ENCODE measurements at regions of chr1 and their contacts with region 1.

Region 1: DNA sequence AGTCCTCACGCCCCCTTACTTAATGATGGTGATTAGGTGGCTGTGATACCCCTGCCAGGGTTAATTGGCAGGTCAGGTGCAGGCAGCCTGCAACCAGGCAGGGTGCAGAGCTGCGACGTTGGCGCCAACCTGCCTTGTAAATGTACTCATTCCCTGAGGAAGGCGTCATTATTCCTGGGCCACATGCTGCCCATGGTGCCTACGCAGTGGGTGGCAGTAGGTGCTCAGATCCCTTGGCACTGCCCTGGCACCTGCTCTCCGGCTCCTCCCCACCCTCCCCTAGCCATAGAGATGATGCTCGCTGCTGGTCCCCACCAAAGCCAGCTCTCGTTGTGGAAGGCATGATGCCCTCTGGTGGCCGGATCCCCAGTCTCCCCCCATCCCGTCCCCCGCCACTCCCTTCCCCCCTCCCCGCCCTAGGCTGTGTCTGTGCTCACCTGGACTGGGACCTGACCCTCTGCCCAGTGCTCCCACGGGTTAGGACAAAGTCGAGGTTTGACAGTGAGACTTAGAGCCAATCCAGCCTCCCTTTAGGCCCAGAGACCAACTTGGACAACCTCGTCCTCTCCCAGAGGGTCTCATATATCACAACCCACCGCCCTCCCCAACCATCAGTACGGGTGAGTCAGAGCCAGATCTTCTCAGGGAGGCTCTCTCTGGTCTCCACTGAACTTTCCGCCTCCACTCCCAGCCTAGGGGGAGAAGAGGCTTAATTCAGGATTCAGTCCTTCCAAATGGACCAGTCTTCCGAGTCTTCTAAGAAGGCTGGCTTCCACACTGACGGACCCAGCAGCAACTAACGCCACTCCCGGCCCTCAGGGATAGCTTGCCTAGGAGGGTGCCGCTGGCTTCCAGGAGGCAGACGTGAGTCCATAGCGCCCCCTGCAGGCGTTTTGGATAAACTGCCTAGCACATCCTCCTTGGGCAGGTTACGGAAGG is 5.7 kb downstream of the KRTCAP2 start:
- DNase-seq: peak; percentile 93
- H3K4me3 ChIP-seq: peak overlapping the region; percentile 11
- H3K27ac ChIP-seq: no peak overlapping the region
- H3K4me1 ChIP-seq: peaks cover 12% of the 10 kb centered on the region
- H3K27me3 ChIP-seq: no peaks in the 10 kb centered on the region
- CTCF ChIP-seq: peak; percentile 98

Region 2: DNA sequence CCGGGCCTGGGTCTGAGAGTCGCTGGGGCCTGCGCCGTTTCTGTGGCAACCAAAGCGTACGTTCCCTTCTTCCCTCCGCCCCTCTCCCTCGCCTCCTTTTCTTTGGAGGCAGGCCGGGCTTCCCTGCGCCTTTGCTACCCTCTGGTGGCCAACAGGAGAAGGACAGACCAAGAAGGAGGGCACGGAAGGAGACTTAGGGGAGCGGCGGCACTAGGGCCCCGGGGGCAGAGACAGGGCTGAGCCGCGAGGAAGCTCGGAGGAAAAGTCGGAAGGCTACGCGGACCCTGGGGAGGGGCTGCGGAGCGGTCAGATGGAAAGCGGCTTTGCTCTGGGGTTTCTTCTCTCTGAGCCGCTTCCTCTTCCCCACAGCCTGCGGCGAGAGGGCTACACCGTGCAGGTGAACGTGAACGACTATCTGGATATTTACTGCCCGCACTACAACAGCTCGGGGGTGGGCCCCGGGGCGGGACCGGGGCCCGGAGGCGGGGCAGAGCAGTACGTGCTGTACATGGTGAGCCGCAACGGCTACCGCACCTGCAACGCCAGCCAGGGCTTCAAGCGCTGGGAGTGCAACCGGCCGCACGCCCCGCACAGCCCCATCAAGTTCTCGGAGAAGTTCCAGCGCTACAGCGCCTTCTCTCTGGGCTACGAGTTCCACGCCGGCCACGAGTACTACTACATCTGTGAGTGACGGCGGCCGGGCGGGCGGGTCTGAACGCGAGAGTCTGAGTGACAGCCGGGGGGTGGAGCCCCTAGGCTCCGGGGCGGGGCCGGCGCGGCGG is 82.5 kb before region 1 on chr1:
- CTCF ChIA-PET with region 1: interaction called, 89 read pairs
- POLR2A ChIA-PET with region 1: no interaction called
- intact Hi-C with region 1: no loop called
- DNase-seq: peak; percentile 99
- H3K4me3 ChIP-seq: peak overlapping the region; percentile 69
- H3K27ac ChIP-seq: peak overlapping the region; percentile 66
- H3K4me1 ChIP-seq: peaks cover 42% of the 10 kb centered on the region
- H3K27me3 ChIP-seq: peaks cover 22% of the 10 kb centered on the region
- CTCF ChIP-seq: peak; percentile 95

Region 3: GRCh38 chr1:155091071-155091709 is 76.2 kb before region 1 on chr1:
- CTCF ChIA-PET with region 1: interaction called, 89 read pairs
- POLR2A ChIA-PET with region 1: no interaction called
- intact Hi-C with region 1: loop called (anchors 1 kb)
- DNase-seq: peak; percentile 91
- H3K4me3 ChIP-seq: no peak overlapping the region
- H3K27ac ChIP-seq: no peak overlapping the region
- H3K4me1 ChIP-seq: peaks cover 7% of the 10 kb centered on the region
- H3K27me3 ChIP-seq: no peaks in the 10 kb centered on the region
- CTCF ChIP-seq: peak; percentile 99

Region 4: DNA sequence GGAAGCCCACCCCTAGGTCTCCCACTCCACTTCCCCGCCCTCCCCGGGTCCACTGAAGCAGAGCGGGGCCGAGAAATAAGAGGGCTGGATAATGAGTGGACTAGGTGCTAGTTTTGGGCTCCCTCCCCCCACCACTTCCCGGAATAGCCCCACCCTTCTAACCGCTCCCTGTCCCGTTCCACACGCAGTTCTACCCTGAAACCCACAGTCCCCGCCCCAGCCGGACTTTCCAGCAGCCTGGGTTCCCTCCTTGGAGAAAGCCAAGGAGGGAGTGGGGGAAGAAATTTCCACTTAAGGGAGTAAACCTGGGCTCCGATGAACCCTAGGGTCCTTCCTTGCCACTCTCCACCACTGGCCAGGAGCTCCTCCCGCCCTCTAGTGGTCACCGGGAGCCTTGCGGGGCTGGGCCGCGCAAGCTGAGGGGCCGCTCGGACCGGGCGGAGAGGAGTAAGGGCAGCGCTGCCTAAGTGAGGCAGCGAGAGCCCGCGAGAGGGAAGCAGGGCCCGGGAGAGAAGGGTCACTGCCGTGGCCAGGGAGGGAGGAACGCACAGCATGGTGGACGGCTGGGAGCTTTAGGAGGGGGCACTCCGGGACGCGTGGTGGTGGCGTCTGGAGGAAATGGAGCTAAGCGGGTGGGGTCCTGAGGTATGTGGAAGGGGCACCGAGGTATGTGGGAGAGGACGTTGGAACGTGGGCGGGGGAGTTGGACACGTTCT is 26.0 kb after region 1 on chr1:
- CTCF ChIA-PET with region 1: interaction called, 15 read pairs
- POLR2A ChIA-PET with region 1: no interaction called
- intact Hi-C with region 1: no loop called
- DNase-seq: peak; percentile 89
- H3K4me3 ChIP-seq: peak overlapping the region; percentile 57
- H3K27ac ChIP-seq: peak overlapping the region; percentile 84
- H3K4me1 ChIP-seq: peaks cover 22% of the 10 kb centered on the region
- H3K27me3 ChIP-seq: no peaks in the 10 kb centered on the region
- CTCF ChIP-seq: peak; percentile 99

Region 5: DNA sequence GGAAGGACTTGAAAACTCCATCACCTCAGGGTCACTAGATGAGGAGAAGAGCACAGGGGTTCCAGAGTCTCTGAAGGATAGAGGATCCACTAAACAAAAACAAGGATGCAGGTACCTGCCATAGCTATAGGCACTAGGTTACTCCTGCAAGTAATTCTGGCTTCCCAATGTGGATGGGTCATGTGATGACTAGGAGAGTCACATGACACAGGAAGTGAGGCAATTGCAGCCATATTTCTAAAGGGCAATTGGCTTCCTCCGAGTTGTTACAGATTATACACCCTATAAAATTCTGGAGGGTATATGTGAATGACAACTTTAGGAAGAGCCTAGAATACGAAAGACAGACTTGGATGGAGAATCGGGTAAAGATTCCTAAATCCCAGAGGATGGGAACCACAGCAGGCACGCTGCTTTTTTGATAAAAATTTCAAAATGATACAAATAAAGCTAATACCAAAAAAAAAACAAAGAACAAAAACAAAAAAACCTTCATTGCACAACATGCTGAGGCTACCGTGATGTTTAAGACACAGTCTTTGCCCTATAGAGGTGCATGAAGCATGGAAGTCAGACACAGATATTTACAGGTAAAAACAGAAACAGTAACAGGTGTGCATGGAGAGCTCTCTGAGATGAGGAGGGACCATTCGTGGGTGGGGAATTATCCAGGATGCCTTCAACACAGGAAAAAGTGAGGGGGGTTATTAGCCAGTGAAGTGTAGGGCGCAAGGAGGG is 51.6 kb after region 1 on chr1:
- CTCF ChIA-PET with region 1: no interaction called
- POLR2A ChIA-PET with region 1: no interaction called
- intact Hi-C with region 1: no loop called
- DNase-seq: peak; percentile 83
- H3K4me3 ChIP-seq: no peak overlapping the region
- H3K27ac ChIP-seq: no peak overlapping the region
- H3K4me1 ChIP-seq: peaks cover 6% of the 10 kb centered on the region
- H3K27me3 ChIP-seq: no peaks in the 10 kb centered on the region
- CTCF ChIP-seq: no peak

Measured in A673 (cell line).